H1 (cell line): ENCODE measurements at regions of chr20 and their contacts with region 1.

Region 1: GRCh38 chr20:43530321-43531090 is 23.0 kb downstream of the L3MBTL1 start:
- DNase-seq: no peak
- H3K4me3 ChIP-seq: no peak overlapping the region
- H3K27ac ChIP-seq: no peak overlapping the region
- H3K4me1 ChIP-seq: no peaks in the 10 kb centered on the region
- H3K27me3 ChIP-seq: no peaks in the 10 kb centered on the region
- CTCF ChIP-seq: no peak
- EP300 ChIP-seq: no peak
- POLR2A ChIP-seq: no peak
- RAD21 ChIP-seq: no peak

Region 2: DNA sequence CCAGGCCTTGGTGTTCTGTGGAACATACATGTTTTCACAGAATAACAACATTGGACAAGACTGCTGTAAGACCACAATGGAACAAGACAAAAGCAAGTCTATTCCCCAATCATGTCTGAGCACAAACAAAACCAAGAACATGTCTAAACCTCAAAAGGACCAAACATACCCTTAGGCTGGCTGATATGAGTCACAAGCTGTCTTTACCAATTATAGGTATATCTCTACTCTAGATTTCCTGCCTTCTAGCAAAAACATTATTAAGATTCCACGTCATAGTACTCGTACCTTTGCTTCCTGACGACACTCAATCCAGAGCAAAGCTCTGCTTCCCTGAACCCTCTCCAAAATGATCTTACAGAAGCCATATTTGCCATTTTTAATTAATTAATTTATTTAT is 38.4 kb before region 1 on chr20:
- CTCF ChIA-PET with region 1: no interaction called
- POLR2A ChIA-PET with region 1: no interaction called
- DNase-seq: no peak
- H3K4me3 ChIP-seq: no peak overlapping the region
- H3K27ac ChIP-seq: no peak overlapping the region
- H3K4me1 ChIP-seq: no peaks in the 10 kb centered on the region
- H3K27me3 ChIP-seq: no peaks in the 10 kb centered on the region
- CTCF ChIP-seq: no peak
- EP300 ChIP-seq: no peak
- POLR2A ChIP-seq: no peak
- RAD21 ChIP-seq: no peak

Region 3: DNA sequence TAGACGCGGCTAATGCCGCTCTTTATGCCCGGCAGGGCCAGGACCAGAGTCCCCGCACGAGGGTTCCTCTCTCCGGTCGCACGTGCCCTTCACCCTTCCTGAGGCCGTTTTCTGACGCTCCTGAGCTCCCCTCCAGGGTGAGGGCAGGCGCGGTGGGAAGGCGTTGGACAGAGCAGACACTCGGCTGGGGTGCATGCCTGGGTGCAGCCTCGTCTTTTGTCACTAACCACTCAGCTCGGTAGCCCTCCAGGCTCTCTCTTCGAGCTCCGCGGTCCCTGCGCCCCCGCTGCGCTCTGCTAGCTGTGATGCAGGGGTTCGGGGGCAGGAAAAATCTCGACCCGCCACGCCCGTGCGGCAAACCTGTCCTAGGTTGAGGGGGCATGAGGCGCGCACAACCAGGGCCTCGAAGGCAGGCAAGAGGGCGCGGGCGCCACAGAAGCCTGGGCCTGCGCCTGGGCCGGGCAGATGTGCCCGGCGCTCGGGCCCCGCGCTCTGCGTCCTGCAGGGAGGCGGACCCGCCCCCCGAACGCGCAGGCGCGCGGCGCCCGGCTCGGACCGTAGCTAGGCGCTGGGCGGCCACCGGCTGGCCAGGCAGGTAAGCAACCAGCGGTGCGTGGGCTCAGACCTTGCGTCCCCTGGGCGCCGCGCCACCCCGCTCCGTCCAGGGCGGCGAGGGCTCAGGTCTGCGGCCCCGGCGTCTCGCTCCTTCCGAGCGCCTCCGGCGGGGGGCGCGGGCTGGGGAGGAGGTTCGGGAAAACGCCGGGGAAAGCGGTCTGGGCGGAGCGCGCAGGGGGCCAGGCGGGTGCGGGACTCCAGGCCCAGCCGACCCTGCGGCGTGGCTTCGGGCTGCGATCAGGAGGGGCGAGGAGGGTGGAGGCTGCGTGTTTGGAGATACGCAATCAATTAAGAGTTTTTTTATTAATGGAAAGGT is 23.1 kb before region 1 on chr20 and contains the start of gene L3MBTL1:
- CTCF ChIA-PET with region 1: interaction called, 11 read pairs
- POLR2A ChIA-PET with region 1: interaction called, 3 read pairs
- DNase-seq: peak in 1 of 2 experiments; percentile 84
- H3K4me3 ChIP-seq: peak within 1 kb of the TSS; percentile 60 to 79 (median 62)
- H3K27ac ChIP-seq: no peak within 1 kb of the TSS
- H3K4me1 ChIP-seq: peaks cover 2 to 5% (median 5%) of the 10 kb centered on the region in 4 experiments; a peak in 6 of 7 replicates
- H3K27me3 ChIP-seq: peaks cover 4 to 18% (median 12%) of the 10 kb centered on the region in 4 experiments
- CTCF ChIP-seq: no peak
- EP300 ChIP-seq: no peak
- POLR2A ChIP-seq: peak in 1 of 2 experiments; percentile 63; a peak in 2 of 3 replicates
- RAD21 ChIP-seq: no peak
- total RNA-seq, gene L3MBTL1: 13.6 and 17.0 TPM in 2 replicates

Region 4: GRCh38 chr20:43514062-43514999 is 16.2 kb before region 1 on chr20:
- CTCF ChIA-PET with region 1: interaction called, 11 read pairs
- POLR2A ChIA-PET with region 1: interaction called, 17 read pairs
- DNase-seq: peak; percentile 69 to 93
- H3K4me3 ChIP-seq: peak overlapping the region; percentile 49 to 71 (median 56)
- H3K27ac ChIP-seq: 0 out of 2 replicates have a peak overlapping the region, but pooled peaks have one; percentile 46
- H3K4me1 ChIP-seq: no peaks in the 10 kb centered on the region; a peak in 3 of 7 replicates
- H3K27me3 ChIP-seq: no peaks in the 10 kb centered on the region
- CTCF ChIP-seq: no peak
- EP300 ChIP-seq: no peak
- POLR2A ChIP-seq: peak in 1 of 2 experiments; percentile 57; a peak in 2 of 3 replicates
- RAD21 ChIP-seq: no peak